GM10248 (cell line): ENCODE measurements at regions of chr9 and their contacts with region 1.

Region 1: DNA sequence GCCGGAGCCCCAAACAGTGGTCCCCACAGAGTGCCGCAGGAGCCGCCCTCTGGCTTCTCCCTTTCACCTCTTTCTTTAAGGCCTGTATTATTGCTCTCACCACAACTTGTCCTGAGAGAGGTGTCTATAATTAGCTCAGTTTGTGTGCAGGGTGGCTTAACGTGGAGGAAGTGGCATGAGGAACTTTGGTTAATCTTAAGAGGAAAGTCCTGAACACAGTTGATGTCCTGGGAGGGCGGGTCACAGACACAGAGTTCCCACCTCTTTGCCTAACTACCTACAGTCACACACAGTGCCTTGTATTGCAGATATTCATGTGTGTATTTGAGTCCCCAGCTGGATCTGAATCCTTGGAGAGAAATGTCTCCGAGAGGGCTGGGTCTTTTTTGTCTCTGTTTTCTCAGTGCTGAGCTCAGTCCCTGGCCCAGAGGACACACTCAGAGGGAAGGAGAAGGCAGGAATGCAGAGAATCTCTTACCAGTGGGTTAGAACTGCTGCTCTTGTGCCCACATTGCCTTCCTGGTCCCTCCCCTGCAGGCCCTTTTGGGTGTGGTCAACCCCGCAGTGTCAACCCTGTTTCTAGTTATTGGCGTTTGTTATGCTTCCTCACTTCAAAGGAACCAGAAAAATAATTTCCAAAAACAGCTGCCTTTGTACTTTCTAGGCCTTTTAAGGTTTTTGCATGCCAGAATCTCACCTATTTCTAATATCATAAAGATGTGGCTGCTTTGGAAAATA is 392.5 kb downstream of the KDM4C start:
- DNase-seq: no peak
- CTCF ChIP-seq: no peak

Region 2: GRCh38 chr9:6864102-6864501 is 286.2 kb before region 1 on chr9:
- CTCF ChIA-PET with region 1: no interaction called
- POLR2A ChIA-PET with region 1: no interaction called
- DNase-seq: no peak
- CTCF ChIP-seq: no peak

Region 3: DNA sequence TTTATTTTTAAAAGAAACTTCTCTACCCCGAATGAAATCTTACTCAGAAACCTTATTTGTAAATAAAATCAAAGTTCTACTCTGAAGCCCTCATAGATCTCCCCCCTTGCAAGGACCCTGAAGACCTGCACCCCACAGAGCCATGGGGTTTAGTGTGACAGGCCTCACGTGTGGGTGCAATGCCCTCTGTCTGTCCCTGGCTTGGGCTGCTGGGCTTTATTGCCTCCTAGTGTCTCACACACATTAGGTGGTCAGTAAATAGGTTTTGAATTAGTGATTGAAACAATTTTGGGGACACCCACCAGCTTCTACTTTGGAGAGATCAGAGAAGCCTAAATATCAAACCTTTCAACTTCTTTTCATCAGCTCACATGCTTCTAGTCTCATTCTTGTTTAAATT is 11.1 kb after region 1 on chr9:
- CTCF ChIA-PET with region 1: interaction called, 10 read pairs
- POLR2A ChIA-PET with region 1: no interaction called
- DNase-seq: no peak
- CTCF ChIP-seq: no peak